PC-3 (cell line): ENCODE measurements at regions of chr2 and their contacts with region 1.

Region 1: DNA sequence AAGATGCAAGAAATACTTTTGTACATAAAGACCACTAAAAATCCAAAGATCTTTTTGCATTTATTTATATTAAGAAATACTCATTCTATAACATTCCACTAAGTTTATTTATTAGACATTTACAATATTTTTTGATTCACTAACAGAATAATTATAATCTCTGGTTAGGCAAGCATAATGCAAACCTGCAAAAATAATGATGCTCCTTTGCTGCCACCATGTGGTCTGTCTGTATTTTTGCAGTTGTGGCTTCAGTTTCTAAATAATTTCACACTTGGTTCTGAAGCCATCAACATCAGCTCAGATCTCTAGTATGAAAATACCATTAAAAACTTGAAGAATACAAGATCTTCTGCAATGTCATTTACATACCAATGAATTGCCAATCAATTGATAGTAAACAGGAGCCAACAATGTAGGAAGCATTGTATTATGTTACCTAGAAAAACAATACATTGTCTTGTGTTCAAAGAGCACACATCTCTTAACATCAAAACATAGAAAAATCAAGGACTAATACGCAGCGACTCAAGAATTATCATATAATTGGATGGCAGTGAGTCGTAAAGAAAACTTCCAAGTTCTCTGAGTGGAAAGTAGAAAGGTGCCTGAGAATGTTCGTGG is 28.8 kb upstream of the WDR75 start:
- DNase-seq: peak; percentile 67
- ATAC-seq: peak; percentile 55
- H3K4me3 ChIP-seq: no peak overlapping the region
- H3K27ac ChIP-seq: peak overlapping the region; percentile 29; the same call in 1 of the 2 replicates
- H3K4me1 ChIP-seq: peaks cover 29% of the 10 kb centered on the region
- H3K27me3 ChIP-seq: no peaks in the 10 kb centered on the region
- CTCF ChIP-seq: peak; percentile 89

Region 2: GRCh38 chr2:187581125-187581896 is 1831.1 kb before region 1 on chr2:
- CTCF ChIA-PET with region 1: no interaction called
- POLR2A ChIA-PET with region 1: no interaction called
- intact Hi-C with region 1: loop called (anchors 5 kb)
- DNase-seq: peak; percentile 75
- ATAC-seq: peak; percentile 37
- H3K4me3 ChIP-seq: peak overlapping the region; percentile 35
- H3K27ac ChIP-seq: peak overlapping the region; percentile 72
- H3K4me1 ChIP-seq: peaks cover 23% of the 10 kb centered on the region
- H3K27me3 ChIP-seq: no peaks in the 10 kb centered on the region
- CTCF ChIP-seq: peak; percentile 82

Region 3: GRCh38 chr2:188983427-188984064 is 428.9 kb before region 1 on chr2:
- CTCF ChIA-PET with region 1: interaction called, 4 read pairs
- POLR2A ChIA-PET with region 1: no interaction called
- intact Hi-C with region 1: loop called (anchors 1 kb)
- DNase-seq: peak; percentile 72
- ATAC-seq: no peak
- H3K4me3 ChIP-seq: no peak overlapping the region
- H3K27ac ChIP-seq: no peak overlapping the region
- H3K4me1 ChIP-seq: no peaks in the 10 kb centered on the region
- H3K27me3 ChIP-seq: no peaks in the 10 kb centered on the region
- CTCF ChIP-seq: peak; percentile 76

Region 4: GRCh38 chr2:189115126-189115525 is 297.3 kb before region 1 on chr2:
- CTCF ChIA-PET with region 1: no interaction called
- POLR2A ChIA-PET with region 1: no interaction called
- intact Hi-C with region 1: loop called (anchors 1 kb)
- DNase-seq: peak; percentile 57
- ATAC-seq: peak; percentile 33
- H3K4me3 ChIP-seq: no peak overlapping the region
- H3K27ac ChIP-seq: peak overlapping the region; percentile 15; the same call in 1 of the 2 replicates
- H3K4me1 ChIP-seq: peaks cover 18% of the 10 kb centered on the region
- H3K27me3 ChIP-seq: no peaks in the 10 kb centered on the region
- CTCF ChIP-seq: peak; percentile 59

Region 5: DNA sequence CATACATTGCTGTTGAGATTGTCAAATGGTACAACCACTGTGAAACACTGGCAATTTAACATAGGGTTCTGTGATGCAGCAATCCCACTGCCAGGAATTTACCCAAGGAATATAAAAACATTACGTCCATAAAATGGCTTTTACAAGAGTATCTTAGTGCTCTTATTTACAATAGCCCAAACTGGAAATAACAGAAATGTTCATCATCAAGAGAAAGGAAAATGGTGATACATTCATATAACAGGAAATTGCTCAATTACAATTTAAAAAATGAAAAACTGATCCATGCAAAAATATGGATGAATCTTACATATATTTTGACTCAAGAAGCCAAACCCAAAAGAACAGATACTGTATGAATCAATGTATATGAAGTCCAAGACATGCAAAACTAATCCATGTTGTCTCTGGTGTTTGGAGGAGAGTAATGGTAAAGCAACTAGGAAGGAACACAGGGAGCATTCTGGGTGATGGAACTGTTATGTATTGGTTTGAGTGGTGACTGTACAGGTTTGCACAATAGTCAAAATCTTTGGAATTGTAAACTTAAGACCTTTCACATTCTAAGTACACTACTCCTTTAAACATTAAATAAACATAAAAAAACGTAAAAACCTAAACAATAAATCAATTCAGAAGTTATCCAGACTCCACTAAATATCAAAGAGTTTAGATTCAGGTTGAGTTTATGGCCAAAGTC is 76.0 kb before region 1 on chr2:
- CTCF ChIA-PET with region 1: no interaction called
- POLR2A ChIA-PET with region 1: no interaction called
- intact Hi-C with region 1: no loop called
- DNase-seq: no peak
- ATAC-seq: peak; percentile 27; the same call in 1 of the 2 replicates
- H3K4me3 ChIP-seq: no peak overlapping the region
- H3K27ac ChIP-seq: no peak overlapping the region
- H3K4me1 ChIP-seq: no peaks in the 10 kb centered on the region
- H3K27me3 ChIP-seq: no peaks in the 10 kb centered on the region
- CTCF ChIP-seq: no peak

Region 6: GRCh38 chr2:189347540-189347939 is 64.9 kb before region 1 on chr2:
- CTCF ChIA-PET with region 1: interaction called, 3 read pairs
- POLR2A ChIA-PET with region 1: no interaction called
- intact Hi-C with region 1: loop called (anchors 1 kb)
- DNase-seq: peak; percentile 94
- ATAC-seq: peak; percentile 94
- H3K4me3 ChIP-seq: peak overlapping the region; percentile 29; the same call in 1 of the 2 replicates
- H3K27ac ChIP-seq: peak overlapping the region; percentile 79
- H3K4me1 ChIP-seq: peaks cover 32% of the 10 kb centered on the region
- H3K27me3 ChIP-seq: no peaks in the 10 kb centered on the region
- CTCF ChIP-seq: peak; percentile 67

Region 7: DNA sequence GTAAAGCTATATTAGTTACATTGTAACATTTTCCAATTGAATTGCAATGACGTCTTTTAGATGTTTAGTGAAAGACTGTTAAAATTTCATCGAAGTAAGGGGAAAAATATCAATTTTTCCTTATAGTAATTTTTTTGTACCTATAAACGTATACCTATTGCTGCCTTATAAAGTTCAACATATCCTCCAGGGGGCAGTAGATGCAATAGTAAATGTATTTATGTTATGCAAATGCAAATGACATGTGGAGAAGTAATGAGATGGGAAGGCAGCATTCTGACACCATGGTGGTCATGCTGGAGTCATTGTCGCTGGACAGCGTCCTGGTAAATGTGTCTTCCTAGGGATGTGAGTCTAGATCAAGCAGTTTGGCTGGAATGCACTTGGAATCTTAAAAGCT is 611.4 kb after region 1 on chr2:
- CTCF ChIA-PET with region 1: no interaction called
- POLR2A ChIA-PET with region 1: no interaction called
- intact Hi-C with region 1: no loop called
- DNase-seq: peak; percentile 73
- ATAC-seq: peak; percentile 73
- H3K4me3 ChIP-seq: no peak overlapping the region
- H3K27ac ChIP-seq: no peak overlapping the region
- H3K4me1 ChIP-seq: no peaks in the 10 kb centered on the region
- H3K27me3 ChIP-seq: peaks cover 8% of the 10 kb centered on the region; the same call in 1 of the 2 replicates
- CTCF ChIP-seq: peak; percentile 77